Activated CD4-positive, alpha-beta T cell treated with anti-CD3 and anti-CD28 coated beads for 36 hours (primary cell): ENCODE measurements at regions of chr4 and their contacts with region 1.

Region 1: DNA sequence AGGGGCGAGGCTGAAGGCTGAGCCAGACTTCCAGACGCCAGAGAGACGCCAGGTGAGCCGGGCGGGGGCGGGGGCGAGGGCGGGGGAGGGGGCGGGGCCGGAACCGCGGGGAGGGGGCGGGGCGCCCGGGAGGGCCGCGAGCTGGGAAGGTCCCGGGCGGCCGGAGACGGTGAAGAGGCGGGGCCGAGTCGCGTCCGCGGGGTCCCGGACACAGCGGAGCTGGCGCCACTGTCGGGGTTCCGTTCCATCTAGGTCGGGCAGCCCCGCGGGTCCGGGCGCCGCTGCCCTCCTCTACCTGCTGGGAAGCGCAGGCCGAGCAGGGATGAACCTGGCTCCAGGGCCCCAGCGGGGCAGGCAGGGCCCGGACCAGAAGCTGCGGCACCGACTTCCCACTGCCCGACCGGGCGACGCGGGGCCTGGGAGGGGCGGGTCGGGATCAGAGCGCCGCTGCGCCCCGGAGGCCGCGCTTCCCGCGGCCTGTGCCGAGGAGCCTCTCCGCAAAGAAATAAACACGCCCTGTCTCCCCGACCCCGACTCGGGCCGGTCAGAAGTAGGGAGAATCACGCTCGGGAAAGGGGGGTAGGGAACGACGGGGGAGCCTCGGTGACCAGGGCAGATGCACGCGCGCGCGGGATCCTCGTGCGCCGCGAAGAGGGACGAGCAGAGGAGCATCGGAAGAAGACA is 10.6 kb downstream of the HMX1 start:
- DNase-seq: no peak
- ATAC-seq: no peak
- H3K4me3 Mint-ChIP-seq: no peak overlapping the region
- H3K27ac Mint-ChIP-seq: no peak overlapping the region
- H3K4me1 Mint-ChIP-seq: peaks cover 2% of the 10 kb centered on the region
- H3K27me3 Mint-ChIP-seq: peaks cover 56% of the 10 kb centered on the region

Region 2: GRCh38 chr4:8525382-8526120 is 335.5 kb before region 1 on chr4:
- CTCF ChIA-PET with region 1: no interaction called
- POLR2A ChIA-PET with region 1: no interaction called
- intact Hi-C with region 1: no loop called
- DNase-seq: no peak
- ATAC-seq: no peak
- H3K4me3 Mint-ChIP-seq: no peak overlapping the region
- H3K27ac Mint-ChIP-seq: no peak overlapping the region
- H3K4me1 Mint-ChIP-seq: no peaks in the 10 kb centered on the region
- H3K27me3 Mint-ChIP-seq: no peaks in the 10 kb centered on the region

Region 3: GRCh38 chr4:8847764-8848163 is 13.3 kb before region 1 on chr4:
- CTCF ChIA-PET with region 1: no interaction called
- POLR2A ChIA-PET with region 1: no interaction called
- intact Hi-C with region 1: no loop called
- DNase-seq: no peak
- ATAC-seq: no peak
- H3K4me3 Mint-ChIP-seq: no peak overlapping the region
- H3K27ac Mint-ChIP-seq: no peak overlapping the region
- H3K4me1 Mint-ChIP-seq: no peaks in the 10 kb centered on the region
- H3K27me3 Mint-ChIP-seq: peaks cover 9% of the 10 kb centered on the region

Region 4: GRCh38 chr4:8871417-8872401 is 10.7 kb after region 1 on chr4 and contains the start of gene HMX1:
- CTCF ChIA-PET with region 1: interaction called, 4 read pairs
- POLR2A ChIA-PET with region 1: no interaction called
- intact Hi-C with region 1: loop called (anchors 1 to 2 kb)
- DNase-seq: no peak
- ATAC-seq: peak; percentile 44
- H3K4me3 Mint-ChIP-seq: no peak within 1 kb of the TSS
- H3K27ac Mint-ChIP-seq: no peak within 1 kb of the TSS
- H3K4me1 Mint-ChIP-seq: peaks cover 5% of the 10 kb centered on the region
- H3K27me3 Mint-ChIP-seq: peaks cover 67% of the 10 kb centered on the region
- total RNA-seq, gene HMX1: not detected

Region 5: DNA sequence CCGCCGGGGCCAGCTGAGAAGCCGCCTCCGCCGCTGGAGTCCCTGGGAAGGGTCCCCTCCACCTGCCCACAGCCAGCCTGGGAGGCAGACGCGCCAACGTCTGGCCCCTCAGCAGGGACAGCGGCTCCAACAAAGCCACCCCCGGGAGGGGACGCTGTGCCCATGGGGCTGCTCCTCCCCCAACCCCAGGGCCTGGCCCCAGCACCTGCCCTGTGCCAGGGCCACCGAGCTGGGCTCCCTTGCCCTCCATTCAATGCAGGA is 16.7 kb after region 1 on chr4:
- CTCF ChIA-PET with region 1: interaction called, 4 read pairs
- POLR2A ChIA-PET with region 1: no interaction called
- intact Hi-C with region 1: loop called (anchors 2 kb)
- DNase-seq: no peak
- ATAC-seq: no peak
- H3K4me3 Mint-ChIP-seq: no peak overlapping the region
- H3K27ac Mint-ChIP-seq: no peak overlapping the region
- H3K4me1 Mint-ChIP-seq: no peaks in the 10 kb centered on the region
- H3K27me3 Mint-ChIP-seq: peaks cover 63% of the 10 kb centered on the region

Region 6: GRCh38 chr4:8891646-8892555 is 30.9 kb after region 1 on chr4:
- CTCF ChIA-PET with region 1: no interaction called
- POLR2A ChIA-PET with region 1: no interaction called
- intact Hi-C with region 1: loop called (anchors 1 to 5 kb)
- DNase-seq: peak; percentile 42
- ATAC-seq: no peak
- H3K4me3 Mint-ChIP-seq: no peak overlapping the region
- H3K27ac Mint-ChIP-seq: no peak overlapping the region
- H3K4me1 Mint-ChIP-seq: no peaks in the 10 kb centered on the region
- H3K27me3 Mint-ChIP-seq: peaks cover 47% of the 10 kb centered on the region